PC-3 (cell line): ENCODE measurements at regions of chr14 and their contacts with region 1.

Region 1: DNA sequence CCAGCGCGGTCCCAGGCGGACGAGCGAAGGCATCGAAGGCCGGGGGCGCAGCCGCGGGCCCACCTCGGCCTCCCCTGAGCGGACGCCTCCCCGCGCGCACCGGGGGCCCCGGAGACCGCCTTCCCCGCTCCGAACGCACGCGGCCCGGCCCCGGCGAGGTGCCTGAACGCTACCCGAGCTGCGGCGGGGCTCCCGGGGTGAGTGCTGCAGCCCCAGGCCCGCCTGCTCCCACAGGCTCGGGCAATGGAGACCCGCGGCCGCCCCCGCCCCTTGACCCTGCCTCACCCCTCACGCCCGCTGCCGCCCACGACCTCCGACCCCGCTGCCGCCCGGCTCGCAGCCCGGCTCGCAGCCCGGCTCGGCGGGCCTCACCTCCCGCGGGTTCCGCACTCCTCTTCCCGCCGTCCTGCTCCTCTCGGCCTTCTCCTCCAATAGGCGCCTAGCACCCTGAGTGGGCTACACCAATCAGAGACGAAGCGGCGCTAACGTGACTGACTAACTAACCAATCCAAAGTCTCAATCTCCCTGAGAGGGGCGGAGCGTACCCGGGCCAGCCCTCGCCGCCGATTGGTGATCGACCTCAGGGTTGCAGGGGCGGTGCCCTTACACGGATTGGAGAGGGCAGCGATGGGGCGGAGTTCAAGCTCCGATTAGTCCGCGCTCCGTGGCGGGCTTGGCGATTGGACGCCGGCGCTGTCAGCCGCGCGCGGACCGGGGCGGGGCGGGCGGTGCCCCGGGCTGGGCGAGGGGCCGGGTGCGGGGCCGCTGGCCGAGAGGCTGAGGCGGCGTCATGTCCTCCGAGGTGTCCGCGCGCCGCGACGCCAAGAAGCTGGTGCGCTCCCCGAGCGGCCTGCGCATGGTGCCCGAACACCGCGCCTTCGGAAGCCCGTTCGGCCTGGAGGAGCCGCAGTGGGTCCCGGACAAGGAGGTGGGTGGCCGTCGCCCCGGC is at the starts of genes XRCC3 and ZFYVE21:
- DNase-seq: peak; percentile 99
- ATAC-seq: peak; percentile 77
- H3K4me3 ChIP-seq: peak within 1 kb of the TSS; percentile 87
- H3K27ac ChIP-seq: peak within 1 kb of the TSS; percentile 29
- H3K4me1 ChIP-seq: peaks cover 51% of the 10 kb centered on the region
- H3K27me3 ChIP-seq: no peaks in the 10 kb centered on the region
- CTCF ChIP-seq: no peak
- total RNA-seq, gene XRCC3: 61.3 and 80.3 TPM in 2 replicates
- total RNA-seq, gene ZFYVE21: 47.2 and 50.1 TPM in 2 replicates

Region 2: GRCh38 chr14:103091041-103091882 is 624.1 kb before region 1 on chr14:
- CTCF ChIA-PET with region 1: no interaction called
- POLR2A ChIA-PET with region 1: no interaction called
- intact Hi-C with region 1: no loop called
- DNase-seq: peak; percentile 56
- ATAC-seq: peak; percentile 72
- H3K4me3 ChIP-seq: peak overlapping the region; percentile 61
- H3K27ac ChIP-seq: no peak overlapping the region
- H3K4me1 ChIP-seq: no peaks in the 10 kb centered on the region; the same call in 1 of the 2 replicates
- H3K27me3 ChIP-seq: no peaks in the 10 kb centered on the region
- CTCF ChIP-seq: peak; percentile 51

Region 3: GRCh38 chr14:103528587-103529382 is 186.5 kb before region 1 on chr14 and contains the start of gene TRMT61A:
- CTCF ChIA-PET with region 1: no interaction called
- POLR2A ChIA-PET with region 1: no interaction called
- intact Hi-C with region 1: no loop called
- DNase-seq: peak; percentile 85
- ATAC-seq: peak; percentile 86
- H3K4me3 ChIP-seq: peak within 1 kb of the TSS; percentile 94
- H3K27ac ChIP-seq: peak within 1 kb of the TSS; percentile 64
- H3K4me1 ChIP-seq: peaks cover 22% of the 10 kb centered on the region
- H3K27me3 ChIP-seq: no peaks in the 10 kb centered on the region
- CTCF ChIP-seq: no peak
- total RNA-seq, gene TRMT61A: 51.2 and 72.9 TPM in 2 replicates

Region 4: GRCh38 chr14:103867020-103867419 is 151.7 kb after region 1 on chr14:
- CTCF ChIA-PET with region 1: no interaction called
- POLR2A ChIA-PET with region 1: interaction called, 19 read pairs
- intact Hi-C with region 1: no loop called
- DNase-seq: no peak
- ATAC-seq: no peak
- H3K4me3 ChIP-seq: no peak overlapping the region
- H3K27ac ChIP-seq: no peak overlapping the region
- H3K4me1 ChIP-seq: no peaks in the 10 kb centered on the region
- H3K27me3 ChIP-seq: no peaks in the 10 kb centered on the region
- CTCF ChIP-seq: no peak